CD4-positive, alpha-beta T cell (primary cell): ENCODE measurements at regions of chr13 and their contacts with region 1.

Region 1: GRCh38 chr13:77026818-77027585 is at the start of gene FBXL3:
- DNase-seq: peak; percentile 70 to 93 (median 81)
- ATAC-seq: peak; percentile 62
- H3K4me3 ChIP-seq: peak within 1 kb of the TSS; percentile 90
- H3K4me3 Mint-ChIP-seq: peak within 1 kb of the TSS; percentile 100
- H3K27ac ChIP-seq: peak within 1 kb of the TSS; percentile 89 to 98
- H3K27ac Mint-ChIP-seq: peak within 1 kb of the TSS; percentile 93
- H3K4me1 ChIP-seq: peaks cover 32% of the 10 kb centered on the region
- H3K4me1 Mint-ChIP-seq: peaks cover 61% of the 10 kb centered on the region
- H3K27me3 ChIP-seq: no peaks in the 10 kb centered on the region
- H3K27me3 Mint-ChIP-seq: no peaks in the 10 kb centered on the region
- CTCF ChIP-seq: no peak
- total RNA-seq, gene FBXL3: 88.7 to 90.4 TPM

Region 2: DNA sequence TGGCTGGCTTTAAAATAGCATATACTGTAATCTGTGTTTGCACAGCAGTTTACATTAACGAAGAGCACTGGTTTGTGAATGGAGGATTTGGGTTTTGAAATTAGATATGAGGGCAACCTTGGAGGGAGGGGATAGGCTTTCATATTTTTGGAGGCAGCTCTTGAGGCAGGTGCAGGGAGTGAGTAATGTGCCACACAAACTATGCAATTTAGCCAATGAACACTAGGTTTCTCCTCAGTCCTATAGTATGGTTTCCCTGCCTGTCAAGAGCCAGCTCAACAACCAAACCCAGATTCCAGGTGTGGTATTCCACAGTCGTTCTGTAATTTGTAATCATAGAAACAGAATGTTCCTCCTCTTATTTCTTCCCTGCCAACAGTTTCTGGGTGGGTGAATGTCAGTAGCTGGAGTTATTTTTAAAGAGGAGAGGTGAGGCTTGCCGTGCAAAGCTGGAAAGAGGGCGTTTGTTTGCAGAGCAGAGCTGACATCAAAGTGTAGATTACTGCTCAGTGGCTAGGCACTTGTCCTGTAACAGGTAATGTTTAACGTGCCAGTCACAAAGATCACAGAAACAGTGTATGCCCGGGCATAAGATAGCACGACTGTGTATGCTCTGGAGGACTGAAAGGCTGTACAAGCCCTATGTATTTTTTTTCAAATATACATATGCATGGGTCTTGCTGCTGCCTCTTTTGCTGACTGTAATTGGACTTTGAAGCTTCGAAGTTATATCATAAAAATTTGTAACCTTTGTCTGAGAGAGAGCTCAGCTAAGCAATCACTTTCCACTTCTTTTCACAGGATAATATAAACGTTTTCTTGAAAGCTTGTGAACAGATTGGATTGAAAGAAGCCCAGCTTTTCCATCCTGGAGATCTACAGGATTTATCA is 1266.6 kb before region 1 on chr13:
- CTCF ChIA-PET with region 1: no interaction called
- POLR2A ChIA-PET with region 1: interaction called, 11 read pairs
- intact Hi-C with region 1: no loop called
- DNase-seq: peak in 6 of 14 experiments; percentile 7 to 56 (median 44)
- ATAC-seq: peak; percentile 73
- H3K4me3 ChIP-seq: peak overlapping the region; percentile 38
- H3K4me3 Mint-ChIP-seq: peak overlapping the region; percentile 91
- H3K27ac ChIP-seq: peak overlapping the region in 1 of 2 donors; percentile 8
- H3K27ac Mint-ChIP-seq: peak overlapping the region; percentile 91
- H3K4me1 ChIP-seq: peaks cover 19% of the 10 kb centered on the region
- H3K4me1 Mint-ChIP-seq: peaks cover 70% of the 10 kb centered on the region
- H3K27me3 ChIP-seq: no peaks in the 10 kb centered on the region
- H3K27me3 Mint-ChIP-seq: no peaks in the 10 kb centered on the region
- CTCF ChIP-seq: peak; percentile 37

Region 3: GRCh38 chr13:76822698-76823267 is 204.2 kb before region 1 on chr13:
- CTCF ChIA-PET with region 1: no interaction called
- POLR2A ChIA-PET with region 1: no interaction called
- intact Hi-C with region 1: no loop called
- DNase-seq: peak in 4 of 14 experiments; percentile 6 to 53 (median 27)
- ATAC-seq: peak; percentile 76
- H3K4me3 ChIP-seq: no peak overlapping the region
- H3K4me3 Mint-ChIP-seq: no peak overlapping the region
- H3K27ac ChIP-seq: no peak overlapping the region
- H3K27ac Mint-ChIP-seq: no peak overlapping the region
- H3K4me1 ChIP-seq: no peaks in the 10 kb centered on the region
- H3K4me1 Mint-ChIP-seq: no peaks in the 10 kb centered on the region
- H3K27me3 ChIP-seq: no peaks in the 10 kb centered on the region
- H3K27me3 Mint-ChIP-seq: peaks cover 11% of the 10 kb centered on the region
- CTCF ChIP-seq: no peak

Region 4: DNA sequence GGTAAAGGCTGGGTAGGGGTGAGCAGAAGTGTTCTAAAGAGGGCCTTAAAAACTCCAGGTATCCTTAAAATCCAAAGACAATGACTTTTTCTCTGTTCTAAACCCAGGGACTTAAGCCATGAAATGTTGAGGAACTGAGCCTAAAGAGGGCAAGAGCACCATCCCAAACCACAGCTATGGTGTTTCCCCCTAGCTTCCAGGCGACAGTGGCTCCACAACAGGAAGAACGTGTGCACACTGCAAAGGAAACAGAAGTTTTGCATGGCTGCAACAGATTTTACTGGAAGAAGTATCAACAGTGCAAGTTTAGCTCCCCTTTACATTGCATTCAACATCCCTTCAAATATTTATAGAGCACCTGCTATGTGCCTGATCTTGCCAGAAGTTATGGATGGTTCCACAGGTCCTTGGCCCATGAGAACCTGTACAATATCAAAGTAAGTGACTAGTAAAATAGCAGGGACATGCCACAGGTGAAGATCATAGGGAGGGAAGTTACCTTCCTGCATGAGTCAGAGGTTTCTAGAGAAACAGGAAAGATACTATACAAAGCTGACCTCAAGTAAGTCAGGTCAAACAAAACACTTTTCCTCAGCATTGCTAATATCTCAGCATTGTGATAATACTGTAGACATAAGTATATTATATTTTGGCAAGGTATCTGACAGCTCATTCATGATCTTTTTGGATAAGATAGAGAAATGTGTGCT is 132.4 kb before region 1 on chr13:
- CTCF ChIA-PET with region 1: no interaction called
- POLR2A ChIA-PET with region 1: no interaction called
- intact Hi-C with region 1: loop called in 1 of 2 experiments (anchors 5 kb)
- DNase-seq: peak in 2 of 14 experiments; percentile 9 to 21
- ATAC-seq: peak; percentile 44
- H3K4me3 ChIP-seq: no peak overlapping the region
- H3K4me3 Mint-ChIP-seq: no peak overlapping the region
- H3K27ac ChIP-seq: no peak overlapping the region
- H3K27ac Mint-ChIP-seq: no peak overlapping the region
- H3K4me1 ChIP-seq: peaks cover 7% of the 10 kb centered on the region
- H3K4me1 Mint-ChIP-seq: peaks cover 5% of the 10 kb centered on the region
- H3K27me3 ChIP-seq: peaks cover 0 to 3% of the 10 kb centered on the region in 2 experiments
- H3K27me3 Mint-ChIP-seq: peaks cover 15% of the 10 kb centered on the region
- CTCF ChIP-seq: no peak

Region 5: GRCh38 chr13:76991796-76992547 is 35.0 kb before region 1 on chr13 and contains the start of gene CLN5:
- CTCF ChIA-PET with region 1: interaction called, 14 read pairs
- POLR2A ChIA-PET with region 1: interaction called, 211 read pairs
- intact Hi-C with region 1: loop called (anchors 1 to 2 kb)
- DNase-seq: peak; percentile 89 to 99 (median 95)
- ATAC-seq: peak; percentile 85
- H3K4me3 ChIP-seq: peak within 1 kb of the TSS; percentile 72
- H3K4me3 Mint-ChIP-seq: peak within 1 kb of the TSS; percentile 97
- H3K27ac ChIP-seq: peak within 1 kb of the TSS; percentile 89 to 95
- H3K27ac Mint-ChIP-seq: peak within 1 kb of the TSS; percentile 99
- H3K4me1 ChIP-seq: peaks cover 30% of the 10 kb centered on the region
- H3K4me1 Mint-ChIP-seq: peaks cover 60% of the 10 kb centered on the region
- H3K27me3 ChIP-seq: no peaks in the 10 kb centered on the region
- H3K27me3 Mint-ChIP-seq: no peaks in the 10 kb centered on the region
- CTCF ChIP-seq: no peak
- total RNA-seq, gene CLN5: 37.4 to 42.9 TPM

Region 6: DNA sequence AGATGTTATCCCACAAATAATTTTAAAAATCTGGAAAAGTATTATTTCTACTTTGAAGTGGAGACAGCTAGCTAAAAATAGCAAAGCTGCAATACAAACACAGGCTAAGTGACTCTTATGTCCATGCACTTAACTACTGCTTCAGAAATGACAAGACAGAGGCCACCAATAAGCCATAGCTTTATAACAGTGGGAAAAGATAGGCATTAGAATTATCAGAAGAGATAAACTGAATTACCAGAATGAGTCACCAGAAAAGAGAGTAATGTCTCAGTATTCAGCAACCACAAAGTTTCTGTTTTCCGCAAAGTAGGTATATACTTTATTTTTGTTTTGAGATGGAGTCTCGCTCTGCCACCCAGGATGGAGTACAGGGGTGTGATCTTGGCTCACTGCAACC is 18.0 kb before region 1 on chr13:
- CTCF ChIA-PET with region 1: no interaction called
- POLR2A ChIA-PET with region 1: interaction called, 63 read pairs
- intact Hi-C with region 1: no loop called
- DNase-seq: no peak
- ATAC-seq: peak; percentile 41
- H3K4me3 ChIP-seq: no peak overlapping the region
- H3K4me3 Mint-ChIP-seq: no peak overlapping the region
- H3K27ac ChIP-seq: no peak overlapping the region
- H3K27ac Mint-ChIP-seq: peak overlapping the region; percentile 70
- H3K4me1 ChIP-seq: peaks cover 6% of the 10 kb centered on the region
- H3K4me1 Mint-ChIP-seq: peaks cover 61% of the 10 kb centered on the region
- H3K27me3 ChIP-seq: no peaks in the 10 kb centered on the region
- H3K27me3 Mint-ChIP-seq: no peaks in the 10 kb centered on the region
- CTCF ChIP-seq: no peak

Region 7: GRCh38 chr13:77329133-77329910 is 302.3 kb after region 1 on chr13:
- CTCF ChIA-PET with region 1: no interaction called
- POLR2A ChIA-PET with region 1: interaction called, 24 read pairs
- intact Hi-C with region 1: loop called (anchors 5 to 10 kb)
- DNase-seq: peak; percentile 73 to 98 (median 86)
- ATAC-seq: peak; percentile 64
- H3K4me3 ChIP-seq: peak overlapping the region; percentile 77
- H3K4me3 Mint-ChIP-seq: peak overlapping the region; percentile 93
- H3K27ac ChIP-seq: peak overlapping the region; percentile 59 to 86
- H3K27ac Mint-ChIP-seq: peak overlapping the region; percentile 91
- H3K4me1 ChIP-seq: peaks cover 11% of the 10 kb centered on the region
- H3K4me1 Mint-ChIP-seq: peaks cover 65% of the 10 kb centered on the region
- H3K27me3 ChIP-seq: no peaks in the 10 kb centered on the region
- H3K27me3 Mint-ChIP-seq: no peaks in the 10 kb centered on the region
- CTCF ChIP-seq: no peak

Region 8: GRCh38 chr13:77448679-77449078 is 421.7 kb after region 1 on chr13:
- CTCF ChIA-PET with region 1: no interaction called
- POLR2A ChIA-PET with region 1: no interaction called
- intact Hi-C with region 1: no loop called
- DNase-seq: peak in 1 of 14 experiments; percentile 4
- ATAC-seq: no peak
- H3K4me3 ChIP-seq: no peak overlapping the region
- H3K4me3 Mint-ChIP-seq: no peak overlapping the region
- H3K27ac ChIP-seq: no peak overlapping the region
- H3K27ac Mint-ChIP-seq: no peak overlapping the region
- H3K4me1 ChIP-seq: no peaks in the 10 kb centered on the region
- H3K4me1 Mint-ChIP-seq: no peaks in the 10 kb centered on the region
- H3K27me3 ChIP-seq: no peaks in the 10 kb centered on the region
- H3K27me3 Mint-ChIP-seq: peaks cover 11% of the 10 kb centered on the region
- CTCF ChIP-seq: no peak